ENCODE measurements at regions of chr19 and their contacts with region 1.

Region 1: DNA sequence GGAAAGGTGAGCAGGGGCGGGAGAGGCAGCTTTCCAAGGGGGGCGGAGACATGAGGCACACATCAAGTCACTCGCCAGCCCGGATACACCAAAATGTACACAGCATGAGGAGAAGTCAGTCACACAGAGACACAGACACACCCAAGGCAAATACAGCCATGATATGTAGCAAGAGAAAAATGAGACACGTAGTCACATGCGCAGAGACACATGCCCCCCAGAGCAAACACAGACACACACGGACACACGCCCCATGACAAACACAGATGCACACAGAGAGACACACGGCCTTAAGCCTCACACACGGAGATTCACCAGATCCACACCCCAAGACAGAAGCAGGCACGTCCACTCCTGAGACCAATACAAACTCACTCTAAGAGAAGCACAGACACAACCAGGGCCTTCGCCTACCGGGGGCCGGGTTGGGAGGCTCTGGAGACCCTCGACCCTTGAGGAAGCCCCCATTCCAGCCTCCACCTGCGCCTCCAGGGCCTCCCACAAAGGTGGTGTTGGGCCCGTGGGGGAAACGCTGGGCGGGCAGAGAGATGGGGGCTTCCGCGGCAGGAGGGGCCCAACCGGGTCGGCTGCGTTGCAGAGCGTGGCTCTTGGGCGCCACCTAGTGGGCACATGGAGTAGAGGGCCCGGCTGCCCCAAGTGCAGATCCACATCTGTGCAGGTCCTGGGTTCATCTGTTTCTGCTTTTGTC is 10.2 kb upstream of the TINCR start:
- DNase-seq: peak; percentile 95
- ATAC-seq: peak; percentile 83
- H3K4me3 ChIP-seq: peak overlapping the region; percentile 67
- H3K27ac ChIP-seq: peak overlapping the region; percentile 83
- H3K4me1 ChIP-seq: peaks cover 5% of the 10 kb centered on the region; the same call in 1 of the 2 replicates
- H3K27me3 ChIP-seq: no peaks in the 10 kb centered on the region
- CTCF ChIP-seq: peak; percentile 99

Region 2: GRCh38 chr19:5369962-5370367 is 208.0 kb before region 1 on chr19:
- CTCF ChIA-PET with region 1: no interaction called
- POLR2A ChIA-PET with region 1: no interaction called
- intact Hi-C with region 1: loop called (anchors 10 kb)
- DNase-seq: peak; percentile 65
- ATAC-seq: peak; percentile 67
- H3K4me3 ChIP-seq: no peak overlapping the region
- H3K27ac ChIP-seq: no peak overlapping the region
- H3K4me1 ChIP-seq: no peaks in the 10 kb centered on the region
- H3K27me3 ChIP-seq: peaks cover 11% of the 10 kb centered on the region; the same call in 1 of the 2 replicates
- CTCF ChIP-seq: peak; percentile 79

Region 3: GRCh38 chr19:5547881-5548280 is 30.1 kb before region 1 on chr19:
- CTCF ChIA-PET with region 1: no interaction called
- POLR2A ChIA-PET with region 1: interaction called, 10 read pairs
- intact Hi-C with region 1: loop called (anchors 1 kb)
- DNase-seq: peak; percentile 81
- ATAC-seq: peak; percentile 73
- H3K4me3 ChIP-seq: peak overlapping the region; percentile 26; the same call in 1 of the 2 replicates
- H3K27ac ChIP-seq: no peak overlapping the region
- H3K4me1 ChIP-seq: no peaks in the 10 kb centered on the region
- H3K27me3 ChIP-seq: no peaks in the 10 kb centered on the region
- CTCF ChIP-seq: peak; percentile 94

Region 4: GRCh38 chr19:5628461-5628860 is 50.5 kb after region 1 on chr19:
- CTCF ChIA-PET with region 1: no interaction called
- POLR2A ChIA-PET with region 1: no interaction called
- intact Hi-C with region 1: no loop called
- DNase-seq: no peak
- ATAC-seq: no peak
- H3K4me3 ChIP-seq: no peak overlapping the region
- H3K27ac ChIP-seq: no peak overlapping the region
- H3K4me1 ChIP-seq: peaks cover 18% of the 10 kb centered on the region
- H3K27me3 ChIP-seq: no peaks in the 10 kb centered on the region
- CTCF ChIP-seq: no peak

Measured in PC-3 (cell line).